Mammary epithelial cell (primary cell): ENCODE measurements at regions of chr18 and their contacts with region 1.

Region 1: GRCh38 chr18:58043491-58044379 is at the start of gene NEDD4L:
- DNase-seq: peak; percentile 82
- H3K4me3 ChIP-seq: peak within 1 kb of the TSS; percentile 80 to 90 (median 85)
- H3K27ac ChIP-seq: peak within 1 kb of the TSS; percentile 71
- H3K4me1 ChIP-seq: peaks cover 17% of the 10 kb centered on the region
- H3K27me3 ChIP-seq: no peaks in the 10 kb centered on the region
- CTCF ChIP-seq: peak; percentile 57 to 93
- total RNA-seq, gene NEDD4L: 145 to 148 TPM

Region 2: DNA sequence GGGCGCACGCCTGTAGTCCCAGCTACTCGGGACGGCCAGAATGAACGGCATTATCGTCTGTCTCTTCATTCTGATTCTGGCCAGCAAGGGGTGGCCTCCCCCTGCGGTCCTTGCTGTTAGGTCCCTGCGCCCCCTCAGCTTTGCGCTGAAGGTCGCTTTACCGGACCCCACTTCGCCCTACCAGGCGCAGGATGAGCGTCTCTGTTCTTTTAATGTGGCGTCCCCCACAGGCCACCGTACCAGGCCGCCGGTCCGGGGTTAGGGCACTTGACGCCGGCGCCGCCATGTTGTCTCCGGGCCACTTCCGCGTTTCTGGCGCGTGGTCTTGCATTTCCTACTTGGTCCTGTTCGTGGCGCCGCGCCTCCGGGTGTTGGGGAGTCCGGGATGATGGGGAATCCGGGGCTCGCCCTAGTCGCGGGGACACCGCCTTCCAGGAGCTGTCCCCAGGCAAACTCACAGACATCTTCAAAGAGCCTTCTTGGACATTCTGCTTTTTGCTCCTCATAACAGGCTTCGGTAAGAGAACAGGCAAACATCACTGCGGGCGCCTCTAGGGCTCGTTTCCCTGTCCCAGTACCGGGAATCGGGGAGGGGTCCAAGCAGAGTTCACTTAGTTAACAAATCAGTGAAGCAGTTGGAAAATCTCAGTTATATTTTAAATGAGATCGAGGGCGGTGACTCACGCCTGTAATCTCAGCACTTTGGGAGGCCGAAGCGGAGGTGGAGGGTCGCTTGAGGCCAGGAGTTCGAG is 413.6 kb before region 1 on chr18:
- CTCF ChIA-PET with region 1: no interaction called
- dilution Hi-C with region 1: no loop called
- in situ Hi-C with region 1: no loop called
- intact Hi-C with region 1: loop called (anchors 5 kb)
- DNase-seq: peak; percentile 93
- H3K4me3 ChIP-seq: peak overlapping the region; percentile 64 to 79 (median 68)
- H3K27ac ChIP-seq: peak overlapping the region; percentile 45
- H3K4me1 ChIP-seq: peaks cover 14% of the 10 kb centered on the region
- H3K27me3 ChIP-seq: no peaks in the 10 kb centered on the region
- CTCF ChIP-seq: peak; percentile 53 to 82

Region 3: GRCh38 chr18:57959278-57959677 is 84.5 kb before region 1 on chr18:
- CTCF ChIA-PET with region 1: no interaction called
- dilution Hi-C with region 1: no loop called
- in situ Hi-C with region 1: no loop called
- intact Hi-C with region 1: loop called (anchors 1 kb)
- DNase-seq: peak; percentile 72
- H3K4me3 ChIP-seq: no peak overlapping the region
- H3K27ac ChIP-seq: no peak overlapping the region
- H3K4me1 ChIP-seq: no peaks in the 10 kb centered on the region
- H3K27me3 ChIP-seq: no peaks in the 10 kb centered on the region
- CTCF ChIP-seq: peak; percentile 39 to 51

Region 4: DNA sequence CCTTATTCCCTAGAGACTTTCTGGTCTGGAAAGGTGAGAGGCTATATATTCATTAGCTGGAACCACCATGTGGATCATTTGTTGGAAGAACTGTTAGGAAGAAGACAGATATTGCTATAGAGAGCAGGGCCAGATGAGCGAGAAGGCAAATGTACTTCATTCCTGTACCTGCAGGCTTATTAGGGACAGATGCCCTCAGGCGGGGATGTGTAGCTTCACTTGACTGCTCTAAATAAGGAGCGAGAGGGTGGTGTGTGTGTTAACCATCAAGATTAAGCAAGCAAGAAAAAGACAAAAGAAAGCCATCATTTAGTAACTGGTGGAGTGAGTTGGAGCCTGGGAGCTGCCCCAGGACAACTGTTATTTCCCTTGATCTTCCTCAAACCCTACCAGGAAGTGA is 36.7 kb after region 1 on chr18:
- CTCF ChIA-PET with region 1: no interaction called
- dilution Hi-C with region 1: no loop called
- in situ Hi-C with region 1: no loop called
- intact Hi-C with region 1: no loop called
- DNase-seq: no peak
- H3K4me3 ChIP-seq: no peak overlapping the region
- H3K27ac ChIP-seq: no peak overlapping the region
- H3K4me1 ChIP-seq: peaks cover 16% of the 10 kb centered on the region
- H3K27me3 ChIP-seq: no peaks in the 10 kb centered on the region
- CTCF ChIP-seq: no peak

Region 5: DNA sequence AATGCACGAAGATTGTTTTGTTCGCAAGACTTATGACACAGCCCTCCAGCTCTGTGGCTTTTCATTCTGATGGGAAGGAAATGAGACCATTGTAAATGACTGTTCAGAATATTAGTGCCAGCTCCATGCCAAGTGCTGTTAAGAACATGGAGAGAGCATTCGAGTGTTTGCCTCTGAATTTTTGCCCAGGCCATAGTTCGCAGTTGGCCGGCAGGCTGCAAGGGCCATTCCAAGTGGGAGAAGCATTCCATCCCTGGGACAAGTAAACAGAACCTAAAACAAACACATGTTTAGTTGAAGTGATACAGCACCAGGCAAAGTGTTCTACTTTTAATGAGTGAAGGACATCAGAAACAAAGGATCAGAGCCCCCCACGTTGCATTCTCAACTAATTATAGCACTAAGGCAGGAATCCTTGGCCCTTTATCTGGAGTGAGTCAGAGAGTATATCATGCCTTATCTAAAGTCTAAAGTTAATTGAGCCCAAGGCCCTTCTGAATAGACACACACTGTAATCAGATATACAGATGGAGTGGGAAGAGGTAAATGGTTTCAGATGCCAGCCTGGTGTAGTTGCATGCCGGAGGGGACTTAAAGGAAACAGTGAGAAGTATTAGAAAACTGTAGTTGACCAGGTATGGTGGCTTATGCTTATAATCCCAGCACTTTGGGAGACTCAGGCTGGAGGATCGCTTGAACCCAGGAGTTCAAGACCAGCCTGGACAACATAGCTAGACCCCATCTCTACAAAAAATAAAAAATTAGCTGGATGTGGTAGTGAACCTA is 53.6 kb after region 1 on chr18:
- CTCF ChIA-PET with region 1: no interaction called
- dilution Hi-C with region 1: no loop called
- in situ Hi-C with region 1: no loop called
- intact Hi-C with region 1: no loop called
- DNase-seq: no peak
- H3K4me3 ChIP-seq: no peak overlapping the region
- H3K27ac ChIP-seq: no peak overlapping the region
- H3K4me1 ChIP-seq: peaks cover 2% of the 10 kb centered on the region
- H3K27me3 ChIP-seq: no peaks in the 10 kb centered on the region
- CTCF ChIP-seq: no peak

Region 6: DNA sequence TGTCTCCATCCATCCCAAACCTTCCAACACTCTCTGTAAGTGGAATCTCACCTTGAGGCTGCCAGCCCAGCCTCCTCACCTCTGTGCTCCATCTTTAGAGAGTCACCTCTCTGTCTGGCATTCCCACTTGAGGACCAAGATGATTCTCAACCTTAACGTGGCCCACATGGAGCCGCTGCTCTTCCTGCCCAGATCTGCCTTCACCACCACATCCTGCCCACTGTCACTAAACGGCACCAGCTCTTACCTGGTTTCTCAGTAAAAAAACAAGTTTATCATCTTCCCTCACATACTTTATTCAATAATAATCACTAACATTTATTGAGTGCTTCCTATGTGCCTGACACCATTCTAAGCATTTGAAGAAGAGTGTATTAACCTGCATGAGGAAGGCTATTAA is 80.7 kb after region 1 on chr18:
- CTCF ChIA-PET with region 1: interaction called, 14 read pairs
- dilution Hi-C with region 1: no loop called
- in situ Hi-C with region 1: loop called in 1 of 2 experiments (anchors 5 kb)
- intact Hi-C with region 1: loop called (anchors 1 kb)
- DNase-seq: no peak
- H3K4me3 ChIP-seq: no peak overlapping the region
- H3K27ac ChIP-seq: no peak overlapping the region
- H3K4me1 ChIP-seq: peaks cover 2% of the 10 kb centered on the region
- H3K27me3 ChIP-seq: no peaks in the 10 kb centered on the region
- CTCF ChIP-seq: no peak

Region 7: GRCh38 chr18:58223717-58224424 is 180.1 kb after region 1 on chr18:
- CTCF ChIA-PET with region 1: no interaction called
- dilution Hi-C with region 1: no loop called
- in situ Hi-C with region 1: no loop called
- intact Hi-C with region 1: loop called (anchors 2 kb)
- DNase-seq: peak; percentile 96
- H3K4me3 ChIP-seq: peak overlapping the region; percentile 71 to 96 (median 93)
- H3K27ac ChIP-seq: peak overlapping the region; percentile 99
- H3K4me1 ChIP-seq: peaks cover 45% of the 10 kb centered on the region
- H3K27me3 ChIP-seq: no peaks in the 10 kb centered on the region
- CTCF ChIP-seq: no peak

Region 8: GRCh38 chr18:58493516-58494253 is 449.9 kb after region 1 on chr18:
- CTCF ChIA-PET with region 1: no interaction called
- dilution Hi-C with region 1: no loop called
- in situ Hi-C with region 1: no loop called
- intact Hi-C with region 1: loop called (anchors 5 kb)
- DNase-seq: peak; percentile 58
- H3K4me3 ChIP-seq: no peak overlapping the region
- H3K27ac ChIP-seq: no peak overlapping the region
- H3K4me1 ChIP-seq: peaks cover 8% of the 10 kb centered on the region
- H3K27me3 ChIP-seq: no peaks in the 10 kb centered on the region
- CTCF ChIP-seq: peak; percentile 79 to 91